B cell (primary cell): ENCODE measurements at regions of chr14 and their contacts with region 1.

Region 1: DNA sequence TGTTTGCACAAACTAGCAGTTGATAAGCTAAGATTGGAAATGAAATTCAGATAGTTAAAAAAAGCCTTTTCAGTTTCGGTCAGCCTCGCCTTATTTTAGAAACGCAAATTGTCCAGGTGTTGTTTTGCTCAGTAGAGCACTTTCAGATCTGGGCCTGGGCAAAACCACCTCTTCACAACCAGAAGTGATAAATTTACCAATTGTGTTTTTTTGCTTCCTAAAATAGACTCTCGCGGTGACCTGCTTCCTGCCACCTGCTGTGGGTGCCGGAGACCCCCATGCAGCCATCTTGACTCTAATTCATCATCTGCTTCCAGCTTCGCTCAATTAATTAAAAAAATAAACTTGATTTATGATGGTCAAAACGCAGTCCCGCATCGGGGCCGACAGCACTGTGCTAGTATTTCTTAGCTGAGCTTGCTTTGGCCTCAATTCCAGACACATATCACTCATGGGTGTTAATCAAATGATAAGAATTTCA is 335.6 kb downstream of the TMEM121 start:
- DNase-seq: peak; percentile 93
- ATAC-seq: peak; percentile 26
- H3K4me3 ChIP-seq: peak overlapping the region; percentile 99 to 100 (median 99)
- H3K4me3 Mint-ChIP-seq: peak overlapping the region; percentile 98
- H3K27ac ChIP-seq: peak overlapping the region; percentile 86 to 94
- H3K27ac Mint-ChIP-seq: peak overlapping the region; percentile 98
- H3K4me1 ChIP-seq: peaks cover 0 to 4% of the 10 kb centered on the region in 2 donors
- H3K4me1 Mint-ChIP-seq: no peaks in the 10 kb centered on the region
- H3K27me3 ChIP-seq: no peaks in the 10 kb centered on the region
- H3K27me3 Mint-ChIP-seq: no peaks in the 10 kb centered on the region
- CTCF ChIP-seq: no peak

Region 2: DNA sequence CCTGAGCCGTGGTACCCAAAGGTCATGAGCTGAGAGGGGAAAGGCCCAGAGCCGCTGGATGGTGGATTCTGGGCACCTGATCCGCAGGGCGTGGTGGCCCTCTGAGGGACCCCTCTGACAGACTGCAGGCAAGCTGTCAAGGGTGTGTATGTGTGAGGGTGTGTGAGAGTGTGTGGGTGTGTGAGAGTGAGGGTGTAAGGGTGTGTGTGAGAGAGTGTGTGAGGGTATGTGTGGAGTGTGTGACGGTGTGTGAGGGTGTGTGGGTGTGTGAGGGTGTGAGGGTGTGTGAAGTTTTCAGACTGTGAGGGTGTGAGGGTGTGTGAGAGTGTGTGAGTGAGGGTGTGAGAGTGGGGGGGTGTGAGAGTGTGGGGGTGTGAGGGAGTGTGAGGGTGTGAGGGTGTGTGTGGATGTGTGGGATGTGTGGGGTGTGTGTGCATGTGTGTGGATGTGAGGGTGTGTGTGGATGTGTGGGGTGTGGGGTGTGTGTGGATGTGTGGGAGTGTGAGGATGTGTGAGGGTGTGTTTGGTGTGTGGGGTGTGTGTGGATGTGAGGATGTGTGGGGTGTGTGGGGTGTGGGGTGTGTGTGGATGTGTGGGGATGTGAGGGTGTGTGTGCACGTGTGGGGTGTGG is 179.0 kb before region 1 on chr14:
- CTCF ChIA-PET with region 1: interaction called, 3 read pairs
- POLR2A ChIA-PET with region 1: interaction called, 8 read pairs
- intact Hi-C with region 1: loop called (anchors 10 kb)
- DNase-seq: peak; percentile 44
- ATAC-seq: no peak
- H3K4me3 ChIP-seq: no peak overlapping the region
- H3K4me3 Mint-ChIP-seq: peak overlapping the region; percentile 78
- H3K27ac ChIP-seq: peak overlapping the region; percentile 85 to 98
- H3K27ac Mint-ChIP-seq: peak overlapping the region; percentile 97
- H3K4me1 ChIP-seq: peaks cover 48 to 74% of the 10 kb centered on the region in 2 donors
- H3K4me1 Mint-ChIP-seq: peaks cover 40% of the 10 kb centered on the region
- H3K27me3 ChIP-seq: no peaks in the 10 kb centered on the region
- H3K27me3 Mint-ChIP-seq: no peaks in the 10 kb centered on the region
- CTCF ChIP-seq: no peak

Region 3: DNA sequence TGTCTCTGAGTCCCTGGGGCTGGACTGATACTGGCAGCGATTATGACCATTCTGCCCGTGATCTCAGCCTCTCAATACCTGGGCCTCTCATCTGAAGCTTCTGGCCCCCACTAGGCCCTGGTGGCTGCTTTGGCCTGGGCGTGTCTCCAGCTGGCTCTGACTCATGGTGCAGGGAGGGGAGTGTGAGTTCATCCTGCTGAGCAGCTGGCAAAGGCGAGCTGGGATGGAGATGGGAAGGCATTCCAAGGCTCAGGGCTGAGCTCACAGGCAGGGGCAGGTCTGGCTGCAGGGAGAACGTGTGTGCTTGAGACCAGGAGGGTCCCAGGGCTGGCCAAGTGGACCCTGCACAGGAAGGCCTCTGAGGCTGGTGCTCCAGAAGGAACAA is 113.8 kb before region 1 on chr14:
- CTCF ChIA-PET with region 1: interaction called, 7 read pairs
- POLR2A ChIA-PET with region 1: interaction called, 60 read pairs
- intact Hi-C with region 1: no loop called
- DNase-seq: no peak
- ATAC-seq: peak; percentile 66
- H3K4me3 ChIP-seq: peak overlapping the region in 4 of 5 experiments; percentile 33 to 56 (median 52)
- H3K4me3 Mint-ChIP-seq: peak overlapping the region; percentile 95
- H3K27ac ChIP-seq: peak overlapping the region in 1 of 2 donors; percentile 49
- H3K27ac Mint-ChIP-seq: peak overlapping the region; percentile 97
- H3K4me1 ChIP-seq: peaks cover 34 to 41% of the 10 kb centered on the region in 2 donors
- H3K4me1 Mint-ChIP-seq: peaks cover 23% of the 10 kb centered on the region
- H3K27me3 ChIP-seq: no peaks in the 10 kb centered on the region
- H3K27me3 Mint-ChIP-seq: no peaks in the 10 kb centered on the region
- CTCF ChIP-seq: no peak

Region 4: DNA sequence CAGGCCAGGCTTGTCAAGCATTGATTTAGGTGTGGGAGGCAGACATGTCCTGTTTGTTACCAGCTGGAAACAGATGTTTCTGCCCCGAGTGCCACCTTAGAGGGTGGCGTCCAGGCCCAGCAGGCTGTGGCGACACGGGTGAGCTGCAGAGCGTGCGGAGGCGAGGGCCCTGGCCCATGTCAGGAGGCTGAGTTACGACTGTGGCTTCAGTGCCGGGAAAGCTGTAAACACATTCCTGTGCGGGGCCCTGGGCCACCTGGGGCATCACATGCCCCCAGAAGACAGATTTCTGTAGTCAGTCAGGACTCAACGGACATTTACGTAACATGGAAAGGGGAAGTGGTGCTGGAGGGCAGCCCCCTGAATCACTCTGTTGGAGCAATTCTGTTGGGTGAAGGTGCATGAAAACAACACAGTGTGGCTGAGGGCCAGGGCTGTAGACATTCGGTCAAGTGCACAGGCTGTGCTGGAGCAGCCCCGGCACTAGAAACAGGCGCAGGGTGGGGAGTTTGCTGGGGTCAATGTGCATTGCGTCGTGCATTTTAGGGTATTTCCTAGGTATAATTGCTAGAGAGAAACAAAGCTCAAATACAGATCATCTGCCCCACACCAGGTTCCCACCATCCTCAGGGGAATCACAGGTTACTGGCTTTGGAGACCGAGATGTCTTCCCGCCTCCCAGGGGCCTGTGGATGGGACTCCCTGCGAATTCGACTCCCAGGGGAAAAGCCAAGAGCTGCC is 43.9 kb before region 1 on chr14:
- CTCF ChIA-PET with region 1: interaction called, 10 read pairs
- POLR2A ChIA-PET with region 1: interaction called, 42 read pairs
- intact Hi-C with region 1: no loop called
- DNase-seq: peak; percentile 97
- ATAC-seq: peak; percentile 86
- H3K4me3 ChIP-seq: peak overlapping the region in 4 of 5 experiments; percentile 21 to 54 (median 30)
- H3K4me3 Mint-ChIP-seq: peak overlapping the region; percentile 76
- H3K27ac ChIP-seq: peak overlapping the region; percentile 99 to 100
- H3K27ac Mint-ChIP-seq: peak overlapping the region; percentile 96
- H3K4me1 ChIP-seq: peaks cover 56 to 58% of the 10 kb centered on the region in 2 donors
- H3K4me1 Mint-ChIP-seq: peaks cover 56% of the 10 kb centered on the region
- H3K27me3 ChIP-seq: no peaks in the 10 kb centered on the region
- H3K27me3 Mint-ChIP-seq: no peaks in the 10 kb centered on the region
- CTCF ChIP-seq: no peak

Region 5: DNA sequence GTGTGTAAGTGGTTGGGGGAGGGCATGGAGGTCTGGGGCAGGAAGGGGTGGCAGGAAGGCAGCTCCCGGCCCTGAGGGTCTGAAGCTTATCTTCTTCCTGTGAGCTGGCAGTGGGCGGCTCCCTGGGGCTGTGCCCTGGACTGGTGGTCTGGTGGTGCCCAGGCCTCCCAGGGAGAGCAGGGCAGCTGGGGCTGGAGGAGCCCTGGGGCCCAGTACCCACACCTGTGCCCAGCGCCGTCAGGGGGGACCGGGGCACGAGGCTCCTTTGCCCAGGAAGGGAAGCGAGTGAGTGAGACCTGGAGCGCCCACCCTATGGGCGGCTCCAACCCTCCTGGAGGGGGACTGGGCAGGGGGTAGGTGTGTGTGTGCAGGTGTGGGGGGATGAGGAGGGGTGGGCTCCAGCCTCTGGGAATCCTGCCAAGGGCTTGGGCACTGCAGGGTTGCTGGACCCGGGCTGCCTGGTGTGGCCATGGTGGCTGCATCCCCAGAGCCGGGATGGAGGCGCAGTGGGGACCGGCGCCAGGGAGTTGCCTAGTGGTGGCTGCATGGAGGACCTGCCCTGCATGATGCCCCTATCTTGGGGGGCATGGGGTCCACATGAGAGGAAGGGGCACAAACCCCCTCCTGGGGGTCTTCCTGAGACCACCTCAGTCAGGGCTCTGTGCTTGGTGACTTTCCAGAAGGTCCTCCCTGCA is 18.0 kb after region 1 on chr14:
- CTCF ChIA-PET with region 1: no interaction called
- POLR2A ChIA-PET with region 1: interaction called, 11 read pairs
- intact Hi-C with region 1: no loop called
- DNase-seq: no peak
- ATAC-seq: no peak
- H3K4me3 ChIP-seq: peak overlapping the region in 1 of 5 experiments; percentile 8
- H3K4me3 Mint-ChIP-seq: no peak overlapping the region
- H3K27ac ChIP-seq: no peak overlapping the region
- H3K27ac Mint-ChIP-seq: no peak overlapping the region
- H3K4me1 ChIP-seq: no peaks in the 10 kb centered on the region
- H3K4me1 Mint-ChIP-seq: no peaks in the 10 kb centered on the region
- H3K27me3 ChIP-seq: no peaks in the 10 kb centered on the region
- H3K27me3 Mint-ChIP-seq: no peaks in the 10 kb centered on the region
- CTCF ChIP-seq: no peak

Region 6: GRCh38 chr14:105914733-105915385 is 52.8 kb after region 1 on chr14:
- CTCF ChIA-PET with region 1: no interaction called
- POLR2A ChIA-PET with region 1: interaction called, 10 read pairs
- intact Hi-C with region 1: no loop called
- DNase-seq: no peak
- ATAC-seq: peak; percentile 48
- H3K4me3 ChIP-seq: peak overlapping the region in 2 of 5 experiments; percentile 17 to 57
- H3K4me3 Mint-ChIP-seq: peak overlapping the region; percentile 72
- H3K27ac ChIP-seq: no peak overlapping the region
- H3K27ac Mint-ChIP-seq: peak overlapping the region; percentile 78
- H3K4me1 ChIP-seq: peaks cover 0 to 13% of the 10 kb centered on the region in 2 donors
- H3K4me1 Mint-ChIP-seq: peaks cover 16% of the 10 kb centered on the region
- H3K27me3 ChIP-seq: no peaks in the 10 kb centered on the region
- H3K27me3 Mint-ChIP-seq: no peaks in the 10 kb centered on the region
- CTCF ChIP-seq: no peak

Region 7: DNA sequence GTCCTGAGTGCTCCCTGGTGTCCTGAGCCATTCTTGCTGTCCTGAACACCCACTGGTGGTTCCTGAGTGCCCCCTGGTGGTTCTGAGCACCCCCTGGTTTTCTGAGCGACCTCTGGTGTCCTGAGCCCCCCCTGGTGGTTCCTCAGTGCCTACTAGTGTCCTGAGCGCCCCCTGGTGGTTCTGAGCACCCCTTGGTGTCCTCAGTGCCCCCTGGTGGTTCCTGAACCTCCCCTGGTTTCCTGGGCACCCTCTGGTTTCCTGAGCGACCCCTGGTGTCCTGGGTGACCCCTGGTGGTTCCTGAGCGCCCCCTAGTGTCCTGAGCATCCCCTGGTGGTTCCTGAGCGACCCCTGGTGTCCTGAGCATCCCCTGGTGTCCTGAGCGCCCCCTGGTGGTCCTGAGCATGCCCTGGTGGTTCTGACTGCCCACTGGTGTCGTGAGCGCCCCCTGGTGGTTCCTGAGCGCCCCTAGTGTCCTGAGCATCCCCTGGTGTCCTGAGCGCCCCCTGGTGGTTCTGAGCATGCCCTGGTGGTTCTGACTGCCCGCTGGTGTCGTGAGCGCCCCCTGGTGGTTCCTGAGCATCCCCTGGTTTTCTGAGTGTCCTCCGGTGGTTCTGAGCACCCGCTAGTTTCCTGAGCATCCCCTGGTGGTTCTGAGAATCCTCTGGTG is 137.5 kb after region 1 on chr14:
- CTCF ChIA-PET with region 1: no interaction called
- POLR2A ChIA-PET with region 1: no interaction called
- intact Hi-C with region 1: no loop called
- DNase-seq: peak; percentile 80
- ATAC-seq: peak; percentile 80
- H3K4me3 ChIP-seq: no peak overlapping the region
- H3K4me3 Mint-ChIP-seq: no peak overlapping the region
- H3K27ac ChIP-seq: no peak overlapping the region
- H3K27ac Mint-ChIP-seq: no peak overlapping the region
- H3K4me1 ChIP-seq: peaks cover 0 to 10% of the 10 kb centered on the region in 2 donors
- H3K4me1 Mint-ChIP-seq: peaks cover 10% of the 10 kb centered on the region
- H3K27me3 ChIP-seq: no peaks in the 10 kb centered on the region
- H3K27me3 Mint-ChIP-seq: no peaks in the 10 kb centered on the region
- CTCF ChIP-seq: peak; percentile 49